ENCODE measurements at regions of chr2 and their contacts with region 1.

Region 1: GRCh38 chr2:41806286-41806685 is 241.5 kb upstream of the PKDCC start:
- DNase-seq: no peak
- ATAC-seq: no peak
- H3K4me3 ChIP-seq: no peak overlapping the region
- H3K27ac ChIP-seq: no peak overlapping the region
- H3K4me1 ChIP-seq: no peaks in the 10 kb centered on the region
- H3K27me3 ChIP-seq: no peaks in the 10 kb centered on the region
- CTCF ChIP-seq: no peak
- POLR2A ChIP-seq: no peak
- RAD21 ChIP-seq: no peak

Region 2: GRCh38 chr2:41483226-41483625 is 323.1 kb before region 1 on chr2:
- CTCF ChIA-PET with region 1: no interaction called
- POLR2A ChIA-PET with region 1: no interaction called
- dilution Hi-C with region 1: no loop called
- in situ Hi-C with region 1: no loop called
- intact Hi-C with region 1: loop called (anchors 5 kb)
- DNase-seq: no peak
- ATAC-seq: no peak
- H3K4me3 ChIP-seq: no peak overlapping the region
- H3K27ac ChIP-seq: no peak overlapping the region
- H3K4me1 ChIP-seq: no peaks in the 10 kb centered on the region
- H3K27me3 ChIP-seq: no peaks in the 10 kb centered on the region
- CTCF ChIP-seq: no peak
- POLR2A ChIP-seq: no peak
- RAD21 ChIP-seq: no peak

Region 3: GRCh38 chr2:43226558-43226954 is 1420.3 kb after region 1 on chr2 and contains the start of gene ZFP36L2:
- CTCF ChIA-PET with region 1: no interaction called
- POLR2A ChIA-PET with region 1: no interaction called
- dilution Hi-C with region 1: no loop called
- in situ Hi-C with region 1: no loop called
- intact Hi-C with region 1: no loop called
- DNase-seq: peak; percentile 93
- ATAC-seq: peak; percentile 73
- H3K4me3 ChIP-seq: peak within 1 kb of the TSS; percentile 87
- H3K27ac ChIP-seq: peak within 1 kb of the TSS; percentile 96
- H3K4me1 ChIP-seq: peaks cover 8% of the 10 kb centered on the region
- H3K27me3 ChIP-seq: no peaks in the 10 kb centered on the region
- CTCF ChIP-seq: peak; percentile 19; the same call in 1 of the 2 replicates
- POLR2A ChIP-seq: peak; percentile 97
- RAD21 ChIP-seq: peak; percentile 14; the same call in 1 of the 2 replicates
- total RNA-seq, gene ZFP36L2: 1.8 and 2.2 TPM in 2 replicates

Measured in IMR-90 (cell line).